ENCODE measurements at regions of chr15 and their contacts with region 1.

Region 1: GRCh38 chr15:39782441-39783138 is at the start of gene FSIP1:
- DNase-seq: peak; percentile 98
- H3K4me3 ChIP-seq: peak within 1 kb of the TSS; percentile 59 to 81 (median 70)
- H3K27ac ChIP-seq: peak within 1 kb of the TSS; percentile 82 to 90 (median 86)
- H3K4me1 ChIP-seq: peaks cover 0 to 32% (median 17%) of the 10 kb centered on the region in 4 donors
- H3K27me3 ChIP-seq: no peaks in the 10 kb centered on the region
- CTCF ChIP-seq: no peak
- EP300 ChIP-seq: no peak
- POLR2A ChIP-seq: peak in 1 of 2 donors; percentile 61
- total RNA-seq, gene FSIP1: 1.1 to 1.5 (median 1.3) TPM

Region 2: GRCh38 chr15:39539466-39539865 is 243.1 kb before region 1 on chr15:
- intact Hi-C with region 1: no loop called
- DNase-seq: no peak
- H3K4me3 ChIP-seq: no peak overlapping the region
- H3K27ac ChIP-seq: peak overlapping the region in 3 of 4 donors; percentile 63 to 72 (median 64)
- H3K4me1 ChIP-seq: peaks cover 0 to 25% (median 17%) of the 10 kb centered on the region in 4 donors
- H3K27me3 ChIP-seq: no peaks in the 10 kb centered on the region
- CTCF ChIP-seq: no peak
- EP300 ChIP-seq: no peak
- POLR2A ChIP-seq: no peak

Region 3: DNA sequence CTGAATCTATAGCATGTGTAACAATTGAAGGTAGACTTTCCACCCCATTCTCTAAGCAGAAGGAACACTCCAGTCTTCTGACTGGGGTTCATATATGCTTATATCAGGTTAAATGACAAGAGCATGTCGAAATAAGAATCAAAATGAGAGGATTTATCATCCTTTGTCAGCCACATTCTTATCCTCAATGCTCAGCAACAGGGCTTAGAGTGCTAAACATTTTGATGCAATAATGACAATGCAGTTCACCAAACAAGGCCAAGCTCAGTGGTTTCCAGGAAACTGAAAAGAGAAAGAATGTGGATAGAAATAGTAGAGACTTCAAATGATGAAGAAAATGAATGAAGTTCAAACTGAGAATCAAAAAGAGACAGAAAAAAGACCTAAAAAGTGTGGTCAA is 77.9 kb before region 1 on chr15:
- intact Hi-C with region 1: no loop called
- DNase-seq: no peak
- H3K4me3 ChIP-seq: no peak overlapping the region
- H3K27ac ChIP-seq: no peak overlapping the region
- H3K4me1 ChIP-seq: no peaks in the 10 kb centered on the region
- H3K27me3 ChIP-seq: no peaks in the 10 kb centered on the region
- CTCF ChIP-seq: no peak
- EP300 ChIP-seq: no peak
- POLR2A ChIP-seq: no peak

Region 4: DNA sequence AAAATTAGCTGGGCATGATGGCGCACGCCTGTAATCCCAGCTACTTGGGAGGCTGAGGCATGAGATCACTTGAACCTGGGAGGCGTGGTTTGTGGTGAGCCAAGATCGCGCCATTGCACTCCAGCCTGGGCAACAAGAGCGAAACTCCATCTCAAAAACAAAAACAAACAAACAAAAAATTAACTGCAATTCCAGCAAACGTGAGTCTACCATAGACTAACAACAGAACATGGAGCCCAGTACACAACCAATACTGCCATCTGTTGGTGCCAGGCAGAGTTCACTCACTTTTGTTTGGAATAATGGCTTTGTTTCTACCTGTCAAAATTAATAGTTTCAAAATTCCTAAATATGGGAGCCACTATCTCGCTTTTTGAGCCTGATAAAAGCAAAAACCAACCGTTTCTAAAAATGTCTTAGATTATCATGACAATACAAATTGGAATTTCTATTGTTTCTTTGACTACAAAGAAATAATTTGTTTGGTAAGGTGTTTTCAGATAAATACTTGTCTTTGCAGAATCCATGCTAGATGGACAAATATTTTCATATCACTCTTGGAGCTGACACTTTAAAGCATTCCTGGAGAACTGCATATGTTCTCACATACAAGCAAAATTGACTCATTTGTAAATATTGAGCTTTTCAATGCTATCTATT is 92.4 kb after region 1 on chr15:
- intact Hi-C with region 1: loop called (anchors 10 kb)
- DNase-seq: no peak
- H3K4me3 ChIP-seq: no peak overlapping the region
- H3K27ac ChIP-seq: no peak overlapping the region
- H3K4me1 ChIP-seq: no peaks in the 10 kb centered on the region
- H3K27me3 ChIP-seq: no peaks in the 10 kb centered on the region
- CTCF ChIP-seq: peak in 2 of 4 experiments; percentile 32 to 44
- EP300 ChIP-seq: no peak
- POLR2A ChIP-seq: no peak

Region 5: DNA sequence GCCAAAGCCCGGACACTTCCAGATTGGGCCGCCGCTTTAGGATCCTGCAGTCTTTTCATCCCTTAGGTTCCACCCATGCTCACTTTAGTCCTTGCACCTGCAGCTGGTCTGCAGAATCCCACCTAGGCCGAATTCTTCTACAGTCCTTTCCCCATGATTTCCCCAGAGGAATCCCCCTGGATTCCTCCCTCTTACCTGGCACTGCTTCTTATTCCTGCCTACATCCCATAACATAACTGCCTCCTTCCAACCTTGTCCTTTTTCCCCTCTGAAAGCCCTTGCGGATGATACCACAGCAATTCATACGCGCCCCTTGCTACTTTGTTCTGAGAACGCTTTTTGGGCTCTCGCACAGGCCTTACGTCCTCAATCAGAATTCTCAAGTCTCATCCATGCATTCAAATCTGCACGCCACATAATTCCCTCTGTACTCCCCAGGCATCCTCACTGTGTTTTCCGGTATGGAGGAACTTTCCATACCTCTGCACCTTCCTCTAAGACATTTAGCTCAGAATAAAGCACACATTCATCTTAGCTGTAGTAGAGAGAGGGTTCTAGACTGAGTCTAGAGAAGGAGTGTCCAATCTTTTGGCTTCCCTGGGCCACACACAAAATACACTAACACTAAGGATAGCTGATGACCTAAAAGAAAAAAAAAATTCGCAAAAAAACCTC is 151.9 kb after region 1 on chr15:
- intact Hi-C with region 1: loop called (anchors 5 kb)
- DNase-seq: no peak
- H3K4me3 ChIP-seq: peak overlapping the region; percentile 64 to 90 (median 78)
- H3K27ac ChIP-seq: peak overlapping the region; percentile 88 to 94 (median 88)
- H3K4me1 ChIP-seq: peaks cover 0 to 48% (median 15%) of the 10 kb centered on the region in 4 donors
- H3K27me3 ChIP-seq: no peaks in the 10 kb centered on the region
- CTCF ChIP-seq: no peak
- EP300 ChIP-seq: no peak
- POLR2A ChIP-seq: no peak

Region 6: GRCh38 chr15:39968273-39969001 is 185.8 kb after region 1 on chr15:
- intact Hi-C with region 1: loop called (anchors 2 kb)
- DNase-seq: no peak
- H3K4me3 ChIP-seq: no peak overlapping the region
- H3K27ac ChIP-seq: peak overlapping the region in 1 of 4 donors; percentile 78
- H3K4me1 ChIP-seq: peaks cover 0 to 41% (median 18%) of the 10 kb centered on the region in 4 donors
- H3K27me3 ChIP-seq: no peaks in the 10 kb centered on the region
- CTCF ChIP-seq: no peak
- EP300 ChIP-seq: no peak
- POLR2A ChIP-seq: no peak

Region 7: DNA sequence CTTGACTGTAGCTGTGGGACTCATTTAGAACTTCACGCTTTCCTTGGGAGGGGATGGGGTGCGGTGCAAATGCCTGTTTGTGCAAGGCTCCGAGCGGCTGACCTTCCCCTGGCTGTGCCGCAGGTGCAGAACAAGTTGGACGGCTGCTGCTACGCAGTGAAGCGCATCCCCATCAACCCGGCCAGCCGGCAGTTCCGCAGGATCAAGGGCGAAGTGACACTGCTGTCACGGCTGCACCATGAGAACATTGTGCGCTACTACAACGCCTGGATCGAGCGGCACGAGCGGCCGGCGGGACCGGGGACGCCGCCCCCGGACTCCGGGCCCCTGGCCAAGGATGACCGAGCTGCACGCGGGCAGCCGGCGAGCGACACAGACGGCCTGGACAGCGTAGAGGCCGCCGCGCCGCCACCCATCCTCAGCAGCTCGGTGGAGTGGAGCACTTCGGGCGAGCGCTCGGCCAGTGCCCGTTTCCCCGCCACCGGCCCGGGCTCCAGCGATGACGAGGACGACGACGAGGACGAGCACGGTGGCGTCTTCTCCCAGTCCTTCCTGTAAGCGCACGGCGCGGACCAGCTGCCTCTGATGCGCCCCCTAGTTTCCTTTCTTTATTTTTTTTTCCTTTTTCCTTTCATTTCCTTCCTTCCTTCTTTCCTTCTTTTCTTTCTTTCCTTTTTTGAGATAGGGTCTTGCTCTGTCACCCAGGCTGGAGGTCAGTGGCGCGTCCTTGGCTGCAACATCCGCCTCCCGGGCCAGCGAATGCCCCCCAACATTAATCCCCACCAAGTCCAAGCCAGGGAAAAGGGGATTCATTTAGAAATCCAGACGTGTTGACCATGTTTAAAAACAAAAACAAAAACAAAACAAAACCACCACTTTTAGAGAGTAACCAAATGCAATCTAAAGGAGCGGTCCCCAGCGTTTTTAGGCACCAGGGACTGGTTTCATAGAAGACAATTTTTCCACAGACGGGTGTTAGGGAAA is 194.0 kb after region 1 on chr15:
- intact Hi-C with region 1: loop called (anchors 2 kb)
- DNase-seq: peak; percentile 82
- H3K4me3 ChIP-seq: peak overlapping the region; percentile 43 to 68 (median 62)
- H3K27ac ChIP-seq: peak overlapping the region; percentile 59 to 79 (median 78)
- H3K4me1 ChIP-seq: peaks cover 0 to 39% (median 17%) of the 10 kb centered on the region in 4 donors
- H3K27me3 ChIP-seq: no peaks in the 10 kb centered on the region
- CTCF ChIP-seq: peak; percentile 41 to 66 (median 60)
- EP300 ChIP-seq: no peak
- POLR2A ChIP-seq: no peak

Region 8: DNA sequence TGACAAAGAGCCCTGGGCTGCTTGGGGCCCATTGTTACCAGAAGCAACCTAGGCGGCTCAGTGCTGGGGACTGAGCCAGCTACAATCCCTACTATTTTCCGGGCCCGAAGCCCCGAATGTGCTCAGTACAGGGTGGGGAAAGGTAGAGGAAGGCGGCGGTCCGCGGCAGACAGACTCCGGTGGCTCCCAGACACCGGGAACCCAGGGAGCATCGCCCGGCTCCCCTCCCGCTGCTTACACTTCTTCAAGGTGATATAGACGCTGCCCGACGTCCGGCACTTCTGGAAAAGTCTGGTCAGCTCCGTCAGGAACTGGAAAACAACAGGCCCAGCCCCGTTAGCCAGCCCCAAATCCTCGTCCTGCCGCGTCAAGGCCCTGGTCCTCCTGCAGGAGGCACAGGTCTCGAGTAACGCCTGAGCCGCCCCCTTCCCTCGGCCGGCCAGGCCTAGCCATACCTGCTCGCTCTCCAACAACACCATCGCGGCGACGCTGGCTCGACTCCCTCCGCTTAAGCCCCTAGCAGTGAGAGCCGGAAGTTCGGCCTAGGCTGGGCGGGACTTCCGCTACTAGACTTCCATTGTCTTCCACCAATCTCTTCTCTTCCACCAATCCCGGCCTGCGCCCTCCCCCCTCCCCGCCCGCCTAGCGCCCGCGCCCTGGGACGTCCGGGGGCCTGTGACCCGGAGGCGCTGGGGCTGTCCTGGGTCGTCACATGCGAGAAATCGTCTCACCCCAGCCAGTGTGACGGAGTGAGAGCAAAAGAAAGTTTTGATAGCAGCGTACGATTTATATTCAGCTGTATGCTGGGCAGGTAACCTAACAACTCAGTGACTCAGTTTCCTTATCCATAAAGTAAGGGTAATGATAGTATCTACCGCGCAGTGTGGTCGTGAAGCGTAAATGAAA is 256.3 kb after region 1 on chr15 and contains the start of gene SRP14:
- intact Hi-C with region 1: loop called (anchors 2 kb)
- DNase-seq: peak; percentile 97
- H3K4me3 ChIP-seq: peak within 1 kb of the TSS; percentile 64 to 87 (median 76)
- H3K27ac ChIP-seq: peak within 1 kb of the TSS; percentile 87 to 97 (median 92)
- H3K4me1 ChIP-seq: peaks cover 0 to 26% (median 19%) of the 10 kb centered on the region in 4 donors
- H3K27me3 ChIP-seq: no peaks in the 10 kb centered on the region
- CTCF ChIP-seq: peak in 2 of 4 experiments; percentile 57 to 59
- EP300 ChIP-seq: no peak
- POLR2A ChIP-seq: peak; percentile 61 to 63
- total RNA-seq, gene SRP14: 307 to 378 (median 342) TPM

Region 9: DNA sequence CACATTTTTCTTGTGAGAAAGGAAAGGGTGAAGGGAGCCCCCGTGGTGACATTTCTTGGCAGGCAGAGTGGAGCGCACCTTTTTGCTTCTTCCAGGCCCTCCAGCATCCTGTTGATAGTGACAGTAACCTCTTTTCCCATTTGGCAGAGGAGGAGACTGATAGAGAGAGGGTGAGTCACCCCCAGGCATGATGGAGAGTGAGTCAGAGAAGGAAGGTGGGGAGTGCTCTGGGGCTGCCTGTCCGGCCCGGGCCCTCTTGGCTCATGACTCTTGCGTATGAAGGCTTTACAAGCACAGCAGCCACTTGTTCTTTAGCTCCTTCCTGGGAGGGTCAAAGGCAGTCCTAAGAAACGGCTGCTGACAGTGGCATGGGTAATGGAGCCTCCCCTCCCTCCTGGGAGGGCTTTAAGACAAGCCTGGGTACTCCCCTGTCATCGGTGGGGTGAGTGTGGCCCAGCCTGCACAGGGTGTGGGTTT is 484.3 kb after region 1 on chr15:
- intact Hi-C with region 1: loop called (anchors 10 kb)
- DNase-seq: peak; percentile 93
- H3K4me3 ChIP-seq: no peak overlapping the region
- H3K27ac ChIP-seq: peak overlapping the region in 3 of 4 donors; percentile 49 to 82 (median 64)
- H3K4me1 ChIP-seq: peaks cover 0 to 38% (median 12%) of the 10 kb centered on the region in 4 donors
- H3K27me3 ChIP-seq: no peaks in the 10 kb centered on the region
- CTCF ChIP-seq: no peak
- EP300 ChIP-seq: peak in 1 of 4 donors; percentile 83
- POLR2A ChIP-seq: no peak

Measured in sigmoid colon (tissue), 7 donors.